CD8-positive, alpha-beta T cell (primary cell): ENCODE measurements at regions of chr6 and their contacts with region 1.

Region 1: GRCh38 chr6:170516783-170517616 is 36.1 kb downstream of the PSMB1 start:
- DNase-seq: peak in 8 of 9 experiments; percentile 11 to 71 (median 35)
- ATAC-seq: peak; percentile 89
- H3K4me3 ChIP-seq: no peak overlapping the region
- H3K4me3 Mint-ChIP-seq: peak overlapping the region; percentile 58
- H3K27ac ChIP-seq: no peak overlapping the region
- H3K27ac Mint-ChIP-seq: no peak overlapping the region
- H3K4me1 ChIP-seq: no peaks in the 10 kb centered on the region
- H3K4me1 Mint-ChIP-seq: peaks cover 2% of the 10 kb centered on the region
- H3K27me3 ChIP-seq: no peaks in the 10 kb centered on the region
- H3K27me3 Mint-ChIP-seq: peaks cover 31% of the 10 kb centered on the region
- CTCF ChIP-seq: peak; percentile 87

Region 2: DNA sequence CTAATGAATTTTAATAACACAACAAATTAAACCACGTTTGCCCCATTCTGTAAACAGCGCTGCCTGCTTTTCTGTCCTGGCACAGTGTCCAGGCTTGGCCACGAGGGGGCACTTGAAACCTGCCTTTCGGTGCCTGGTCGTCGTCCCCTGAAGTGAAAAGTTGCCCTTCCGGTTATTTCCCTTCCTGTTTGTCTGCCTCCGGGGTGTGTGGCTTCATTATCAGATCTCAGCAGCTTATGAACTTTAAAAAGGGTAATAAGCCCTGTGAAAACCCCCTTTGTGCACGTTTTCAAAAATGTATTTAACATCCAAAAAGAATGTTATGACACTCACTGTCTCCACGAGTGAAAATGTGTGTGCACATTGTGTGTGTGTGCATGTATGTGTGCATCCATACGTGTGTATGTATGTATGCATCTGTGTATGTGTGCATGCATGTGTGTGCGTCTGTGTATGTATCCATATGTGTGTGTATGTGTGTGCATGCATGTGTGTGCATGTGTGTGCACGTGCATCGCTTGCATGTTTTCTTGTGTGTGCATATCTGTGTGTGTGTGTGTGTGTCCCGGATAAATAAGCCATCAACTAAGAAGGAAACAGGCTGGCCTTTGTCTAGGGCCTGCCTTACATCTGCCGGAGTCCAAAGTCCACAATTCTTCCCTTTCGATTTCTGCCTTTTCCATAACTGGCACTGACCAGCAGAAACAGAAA is 1621.7 kb before region 1 on chr6:
- CTCF ChIA-PET with region 1: no interaction called
- POLR2A ChIA-PET with region 1: no interaction called
- intact Hi-C with region 1: loop called in 1 of 2 experiments (anchors 2 kb)
- DNase-seq: peak; percentile 52 to 91 (median 78)
- ATAC-seq: peak; percentile 98
- H3K4me3 ChIP-seq: peak overlapping the region; percentile 8 to 16
- H3K4me3 Mint-ChIP-seq: peak overlapping the region; percentile 57
- H3K27ac ChIP-seq: no peak overlapping the region
- H3K27ac Mint-ChIP-seq: peak overlapping the region; percentile 69
- H3K4me1 ChIP-seq: peaks cover 7% of the 10 kb centered on the region
- H3K4me1 Mint-ChIP-seq: peaks cover 17% of the 10 kb centered on the region
- H3K27me3 ChIP-seq: no peaks in the 10 kb centered on the region
- H3K27me3 Mint-ChIP-seq: peaks cover 4% of the 10 kb centered on the region
- CTCF ChIP-seq: peak; percentile 81

Region 3: GRCh38 chr6:168956884-168957730 is 1559.9 kb before region 1 on chr6:
- CTCF ChIA-PET with region 1: no interaction called
- POLR2A ChIA-PET with region 1: no interaction called
- intact Hi-C with region 1: loop called in 1 of 2 experiments (anchors 5 kb)
- DNase-seq: peak in 8 of 9 experiments; percentile 7 to 66 (median 44)
- ATAC-seq: no peak
- H3K4me3 ChIP-seq: no peak overlapping the region
- H3K4me3 Mint-ChIP-seq: no peak overlapping the region
- H3K27ac ChIP-seq: no peak overlapping the region
- H3K27ac Mint-ChIP-seq: no peak overlapping the region
- H3K4me1 ChIP-seq: no peaks in the 10 kb centered on the region
- H3K4me1 Mint-ChIP-seq: no peaks in the 10 kb centered on the region
- H3K27me3 ChIP-seq: no peaks in the 10 kb centered on the region
- H3K27me3 Mint-ChIP-seq: peaks cover 41% of the 10 kb centered on the region
- CTCF ChIP-seq: peak; percentile 59

Region 4: DNA sequence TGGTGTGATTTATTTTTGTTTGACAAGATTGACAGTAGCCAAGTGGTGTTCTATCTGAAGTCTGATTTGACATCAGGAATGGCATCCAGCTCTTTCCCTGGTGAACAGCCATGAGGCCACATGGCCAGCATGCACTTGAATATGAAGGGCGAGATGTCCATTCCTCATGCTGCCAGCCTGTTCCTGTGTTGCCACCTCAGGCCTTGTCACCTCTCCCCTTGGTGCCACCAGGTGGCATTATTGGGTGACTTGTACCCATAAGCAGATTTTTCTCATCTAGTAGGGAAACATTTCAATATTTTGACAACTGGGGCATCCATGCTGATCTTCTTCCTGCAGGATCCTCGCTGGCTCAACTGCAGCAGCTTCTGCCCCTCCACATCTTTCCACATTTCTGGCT is 566.4 kb before region 1 on chr6:
- CTCF ChIA-PET with region 1: interaction called, 15 read pairs
- POLR2A ChIA-PET with region 1: no interaction called
- intact Hi-C with region 1: loop called (anchors 1 kb)
- DNase-seq: peak in 7 of 9 experiments; percentile 16 to 69 (median 51)
- ATAC-seq: peak; percentile 40
- H3K4me3 ChIP-seq: no peak overlapping the region
- H3K4me3 Mint-ChIP-seq: no peak overlapping the region
- H3K27ac ChIP-seq: no peak overlapping the region
- H3K27ac Mint-ChIP-seq: no peak overlapping the region
- H3K4me1 ChIP-seq: no peaks in the 10 kb centered on the region
- H3K4me1 Mint-ChIP-seq: no peaks in the 10 kb centered on the region
- H3K27me3 ChIP-seq: no peaks in the 10 kb centered on the region
- H3K27me3 Mint-ChIP-seq: no peaks in the 10 kb centered on the region
- CTCF ChIP-seq: peak; percentile 53

Region 5: DNA sequence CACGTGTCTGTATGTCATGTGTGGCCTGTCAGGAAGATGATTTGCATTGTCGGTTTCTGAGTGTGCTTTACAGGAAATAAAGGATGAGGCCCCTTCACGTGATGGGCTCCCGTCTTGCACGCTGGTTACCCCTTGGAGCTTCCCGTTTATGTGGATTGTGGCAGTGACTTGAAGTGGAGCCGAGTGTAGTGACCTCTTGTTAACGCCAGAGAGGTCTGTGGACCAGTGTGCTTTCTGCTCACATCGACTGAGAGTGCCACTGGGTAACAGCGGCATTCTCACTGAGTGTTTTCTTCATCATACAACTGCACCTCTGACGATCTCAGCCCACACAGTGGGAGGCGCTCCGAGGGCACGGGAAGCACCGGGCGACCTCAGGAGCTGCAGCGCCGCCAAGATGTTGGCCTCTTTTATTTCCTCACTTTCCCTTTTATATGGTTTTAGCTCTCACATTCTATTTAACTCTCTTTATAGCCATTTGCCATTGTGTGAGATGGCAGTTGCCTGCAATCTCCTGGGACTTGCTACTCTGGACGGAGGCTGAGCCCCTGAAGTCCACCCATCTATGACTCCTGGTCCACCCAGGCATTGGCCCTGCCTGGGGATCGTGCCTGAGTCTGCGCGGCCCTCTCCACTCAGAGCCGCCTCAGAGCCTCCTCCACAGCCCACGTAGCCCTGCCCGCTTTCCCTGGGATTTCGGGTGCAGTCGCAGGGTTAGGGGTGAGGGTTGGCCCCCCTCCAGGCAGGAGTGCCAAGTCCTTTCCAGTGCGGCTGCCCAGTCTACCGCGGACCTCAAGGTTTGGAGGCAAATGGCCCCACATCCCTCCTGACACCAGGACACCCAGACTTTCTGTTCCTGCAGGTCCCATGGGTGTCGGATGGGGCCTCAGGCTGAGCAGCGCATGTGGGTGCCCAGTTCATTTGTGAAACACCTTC is 526.6 kb before region 1 on chr6:
- CTCF ChIA-PET with region 1: interaction called, 5 read pairs
- POLR2A ChIA-PET with region 1: no interaction called
- intact Hi-C with region 1: loop called in 1 of 2 experiments (anchors 2 kb)
- DNase-seq: peak in 7 of 9 experiments; percentile 18 to 76 (median 35)
- ATAC-seq: peak; percentile 93
- H3K4me3 ChIP-seq: no peak overlapping the region
- H3K4me3 Mint-ChIP-seq: peak overlapping the region; percentile 76
- H3K27ac ChIP-seq: no peak overlapping the region
- H3K27ac Mint-ChIP-seq: peak overlapping the region; percentile 90
- H3K4me1 ChIP-seq: peaks cover 28% of the 10 kb centered on the region
- H3K4me1 Mint-ChIP-seq: peaks cover 29% of the 10 kb centered on the region
- H3K27me3 ChIP-seq: no peaks in the 10 kb centered on the region
- H3K27me3 Mint-ChIP-seq: no peaks in the 10 kb centered on the region
- CTCF ChIP-seq: no peak